ENCODE measurements at regions of chr4 and their contacts with region 1.

Region 1: DNA sequence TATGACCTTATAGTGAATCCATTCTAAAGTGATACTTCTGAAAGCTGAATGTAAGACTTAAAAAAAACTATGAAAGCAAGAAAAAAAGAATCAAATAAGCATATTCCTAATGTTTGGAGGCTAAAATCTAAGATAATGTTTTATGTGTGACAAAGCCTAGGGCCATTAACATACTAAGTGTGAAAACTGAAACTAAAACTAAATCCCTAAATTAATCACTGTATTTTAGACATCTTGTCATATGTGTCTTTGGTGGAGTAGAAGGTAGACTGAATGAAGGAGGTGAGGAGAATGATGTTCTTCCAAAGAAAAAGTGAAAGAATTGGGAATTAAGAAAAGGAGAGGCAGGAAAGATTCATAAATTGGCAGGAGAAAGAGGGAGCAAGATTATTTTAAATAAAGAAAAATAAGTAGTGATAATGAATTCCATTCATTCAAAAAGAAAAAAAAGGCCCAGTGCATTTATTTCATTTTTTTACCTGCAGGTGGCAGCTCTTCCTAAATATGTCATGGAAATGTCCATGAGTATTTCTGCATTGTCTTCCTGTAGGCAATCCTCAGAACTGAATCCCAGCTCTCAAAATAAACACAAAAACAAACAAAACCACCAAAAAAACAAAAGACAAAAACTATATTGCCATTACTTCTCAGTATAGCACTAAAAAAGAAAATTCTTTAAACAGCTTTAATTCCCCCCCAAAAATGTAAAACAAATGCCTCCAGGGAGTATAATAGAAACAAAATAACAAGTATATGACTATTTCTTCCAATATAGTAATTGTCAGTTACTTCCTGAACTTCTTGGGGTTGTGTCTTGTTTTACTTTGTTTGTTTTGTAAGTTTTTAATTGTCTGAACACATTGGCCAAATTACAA is 17.0 kb upstream of the AP1AR start:
- DNase-seq: peak; percentile 55
- ATAC-seq: peak; percentile 42; the same call in 1 of the 2 replicates
- H3K4me3 ChIP-seq: no peak overlapping the region
- H3K27ac ChIP-seq: no peak overlapping the region
- H3K4me1 ChIP-seq: no peaks in the 10 kb centered on the region
- H3K27me3 ChIP-seq: no peaks in the 10 kb centered on the region
- CTCF ChIP-seq: peak; percentile 54

Region 2: GRCh38 chr4:112266821-112267220 is 52.2 kb after region 1 on chr4:
- CTCF ChIA-PET with region 1: no interaction called
- POLR2A ChIA-PET with region 1: no interaction called
- intact Hi-C with region 1: loop called (anchors 1 kb)
- DNase-seq: peak; percentile 23
- ATAC-seq: peak; percentile 44; the same call in 1 of the 2 replicates
- H3K4me3 ChIP-seq: no peak overlapping the region
- H3K27ac ChIP-seq: no peak overlapping the region
- H3K4me1 ChIP-seq: peaks cover 11% of the 10 kb centered on the region
- H3K27me3 ChIP-seq: no peaks in the 10 kb centered on the region
- CTCF ChIP-seq: peak; percentile 63